Endothelial cell of umbilical vein (primary cell): ENCODE measurements at regions of chr6 and their contacts with region 1.

Region 1: DNA sequence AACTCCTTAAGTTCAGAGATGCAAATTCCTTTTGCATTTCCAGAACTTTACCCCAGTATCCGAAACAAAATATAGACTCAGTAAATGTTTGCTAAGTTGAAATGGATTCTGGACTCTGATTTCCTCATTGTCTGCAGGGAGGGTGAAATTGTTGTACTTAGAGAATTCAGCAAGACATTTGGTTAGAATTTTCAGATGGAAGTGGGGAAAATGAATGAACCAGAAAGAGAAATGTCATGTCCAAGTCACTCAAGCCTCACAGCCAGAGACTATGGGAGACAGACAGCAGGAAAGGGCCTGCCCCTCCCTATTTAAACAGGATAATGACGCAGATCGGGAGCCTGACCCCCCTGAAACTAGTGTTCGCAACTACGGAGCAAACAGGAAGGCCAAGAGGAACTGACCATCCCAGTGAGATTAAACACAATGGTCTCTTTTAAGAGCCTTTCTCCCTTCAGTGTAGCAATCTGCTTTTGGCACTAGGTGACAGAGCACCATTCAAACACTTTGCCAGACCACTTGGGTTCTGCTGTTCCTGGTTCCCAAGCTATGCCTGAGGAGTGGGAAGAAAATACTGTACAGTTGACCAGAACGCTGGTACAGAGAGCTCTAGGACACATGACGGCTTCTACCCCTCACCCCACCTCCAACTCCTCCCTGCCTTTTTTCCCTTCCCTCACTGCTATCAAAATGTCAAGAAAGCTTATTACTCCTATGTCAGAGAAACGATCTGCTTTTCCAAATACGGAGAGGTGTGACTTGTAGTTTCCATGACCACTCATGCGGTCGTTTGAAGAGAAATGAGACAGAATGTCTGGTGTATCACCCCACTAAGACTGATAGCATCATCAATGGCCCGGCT is 13.7 kb downstream of the NEDD9 start:
- DNase-seq: peak; percentile 96
- H3K4me3 ChIP-seq: peak overlapping the region in 1 of 3 experiments; percentile 1
- H3K27ac ChIP-seq: peak overlapping the region; percentile 91
- H3K4me1 ChIP-seq: peaks cover 96% of the 10 kb centered on the region
- H3K27me3 ChIP-seq: no peaks in the 10 kb centered on the region
- CTCF ChIP-seq: no peak
- POLR2A ChIP-seq: peak; percentile 78

Region 2: DNA sequence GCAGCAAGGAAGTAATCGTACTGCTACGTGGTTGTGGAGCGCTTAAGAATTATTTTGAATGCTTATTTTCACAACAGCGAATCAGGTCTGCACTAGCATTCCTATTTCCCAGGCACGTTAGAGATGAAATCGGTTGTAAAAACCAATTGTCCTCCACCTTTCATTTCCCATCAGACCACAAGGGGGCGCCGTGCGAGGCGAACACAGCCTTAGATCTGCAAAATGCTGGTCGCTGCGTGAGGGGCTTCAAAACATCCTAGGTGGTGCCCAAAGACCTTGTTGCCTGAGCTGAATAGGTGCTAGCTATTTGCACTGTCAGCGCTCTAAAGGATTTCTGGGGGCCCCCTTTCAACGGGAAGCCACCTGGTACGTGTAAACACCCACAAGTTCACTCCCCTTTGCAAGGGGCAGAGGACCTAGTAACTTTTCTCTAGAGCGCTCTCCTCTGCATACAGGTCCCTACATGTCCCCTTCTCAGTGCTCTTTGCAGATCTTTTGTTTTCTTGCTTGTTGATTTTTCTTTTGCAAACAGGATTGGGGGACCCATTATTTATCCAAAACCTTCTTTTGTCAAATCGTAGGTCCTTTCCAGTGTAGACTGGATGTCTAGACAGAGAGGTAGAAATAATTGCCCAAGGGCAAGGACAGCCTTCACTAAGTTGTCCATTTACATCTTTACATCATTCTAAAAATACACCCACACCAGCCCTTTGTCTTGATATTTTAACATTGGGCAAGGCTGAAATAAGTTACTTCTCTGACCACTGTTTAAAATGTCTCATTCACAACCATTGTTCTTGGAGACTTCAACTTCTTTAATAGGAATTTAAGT is 46.1 kb before region 1 on chr6:
- CTCF ChIA-PET with region 1: interaction called, 3 read pairs
- POLR2A ChIA-PET with region 1: no interaction called
- dilution Hi-C with region 1: no loop called
- intact Hi-C with region 1: loop called (anchors 1 kb)
- DNase-seq: peak; percentile 71
- H3K4me3 ChIP-seq: no peak overlapping the region
- H3K27ac ChIP-seq: no peak overlapping the region
- H3K4me1 ChIP-seq: no peaks in the 10 kb centered on the region
- H3K27me3 ChIP-seq: no peaks in the 10 kb centered on the region
- CTCF ChIP-seq: peak; percentile 78 to 82
- POLR2A ChIP-seq: no peak

Region 3: GRCh38 chr6:11194356-11195218 is 24.2 kb before region 1 on chr6:
- CTCF ChIA-PET with region 1: interaction called, 3 read pairs
- POLR2A ChIA-PET with region 1: interaction called, 3 read pairs
- dilution Hi-C with region 1: no loop called
- intact Hi-C with region 1: loop called (anchors 1 kb)
- DNase-seq: peak; percentile 91
- H3K4me3 ChIP-seq: peak overlapping the region in 1 of 3 experiments; percentile 9
- H3K27ac ChIP-seq: peak overlapping the region; percentile 98
- H3K4me1 ChIP-seq: peaks cover 37% of the 10 kb centered on the region
- H3K27me3 ChIP-seq: no peaks in the 10 kb centered on the region
- CTCF ChIP-seq: peak in 1 of 2 donors; percentile 9
- POLR2A ChIP-seq: peak; percentile 38

Region 4: DNA sequence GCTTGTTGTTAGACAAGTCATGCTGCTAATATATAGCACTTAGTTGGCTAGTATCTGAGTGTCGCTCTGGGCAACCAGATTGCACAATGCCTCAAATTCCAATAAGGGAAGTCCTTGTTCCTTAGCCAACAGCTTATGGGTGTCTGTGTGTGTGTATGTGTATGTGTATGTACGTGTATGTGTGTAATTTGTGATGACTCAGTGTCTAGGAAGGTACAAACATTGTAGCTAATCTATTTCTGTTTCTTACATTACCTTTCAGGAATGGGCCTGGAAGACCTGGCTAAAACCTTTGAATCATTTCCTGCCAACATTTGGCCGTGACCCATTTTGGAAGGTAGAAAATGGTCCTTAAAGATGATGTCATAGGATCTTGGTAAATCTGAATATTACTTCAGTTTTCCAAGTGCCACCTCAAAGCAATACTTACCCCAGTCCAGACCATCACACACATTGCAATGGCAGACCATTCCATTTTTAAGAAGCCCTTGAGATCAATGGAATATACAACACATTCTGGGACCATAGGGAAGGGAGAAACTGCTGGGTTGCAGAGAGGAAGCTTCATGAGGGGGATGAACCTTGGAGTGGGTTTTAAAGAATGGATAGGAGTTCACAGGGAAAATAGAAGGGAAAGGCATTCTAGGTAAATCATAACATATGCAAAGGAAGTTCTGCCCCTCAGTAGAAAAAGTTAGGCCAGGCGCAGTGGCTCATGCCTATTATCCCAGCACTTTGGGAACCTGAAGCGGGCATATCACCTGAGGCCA is 11.4 kb before region 1 on chr6:
- CTCF ChIA-PET with region 1: interaction called, 18 read pairs
- POLR2A ChIA-PET with region 1: no interaction called
- dilution Hi-C with region 1: no loop called
- intact Hi-C with region 1: loop called (anchors 1 kb)
- DNase-seq: peak; percentile 96
- H3K4me3 ChIP-seq: no peak overlapping the region
- H3K27ac ChIP-seq: peak overlapping the region; percentile 95
- H3K4me1 ChIP-seq: peaks cover 69% of the 10 kb centered on the region
- H3K27me3 ChIP-seq: no peaks in the 10 kb centered on the region
- CTCF ChIP-seq: no peak
- POLR2A ChIP-seq: peak; percentile 43